HepG2 (cell line): ENCODE measurements at regions of chr11 and their contacts with region 1.

Region 1: GRCh38 chr11:28529540-28530410 is 421.6 kb downstream of the METTL15 start:
- DNase-seq: peak; percentile 50
- ATAC-seq: peak; percentile 67; the same call in 2 of the 3 replicates
- H3K4me3 ChIP-seq: no peak overlapping the region
- H3K27ac ChIP-seq: no peak overlapping the region
- H3K4me1 ChIP-seq: no peaks in the 10 kb centered on the region
- H3K27me3 ChIP-seq: no peaks in the 10 kb centered on the region
- CTCF ChIP-seq: peak; percentile 39
- EP300 ChIP-seq: no peak
- POLR2A ChIP-seq: no peak
- RAD21 ChIP-seq: no peak

Region 2: GRCh38 chr11:27839226-27839870 is 690.4 kb before region 1 on chr11:
- CTCF ChIA-PET with region 1: no interaction called
- POLR2A ChIA-PET with region 1: no interaction called
- in situ Hi-C with region 1: no loop called
- intact Hi-C with region 1: loop called (anchors 1 kb)
- DNase-seq: peak; percentile 5
- ATAC-seq: no peak
- H3K4me3 ChIP-seq: no peak overlapping the region
- H3K27ac ChIP-seq: no peak overlapping the region
- H3K4me1 ChIP-seq: no peaks in the 10 kb centered on the region
- H3K27me3 ChIP-seq: no peaks in the 10 kb centered on the region
- CTCF ChIP-seq: no peak
- EP300 ChIP-seq: no peak
- POLR2A ChIP-seq: no peak
- RAD21 ChIP-seq: no peak